ENCODE measurements at regions of chr16 and their contacts with region 1.

Region 1: GRCh38 chr16:71937868-71938510 is 42.7 kb downstream of the IST1 start:
- DNase-seq: no peak
- H3K4me3 ChIP-seq: no peak overlapping the region
- H3K27ac ChIP-seq: no peak overlapping the region
- H3K4me1 ChIP-seq: peaks cover 0 to 8% of the 10 kb centered on the region in 2 donors
- H3K27me3 ChIP-seq: no peaks in the 10 kb centered on the region
- CTCF ChIP-seq: no peak
- POLR2A ChIP-seq: no peak

Region 2: GRCh38 chr16:70481929-70482536 is 1456.0 kb before region 1 on chr16:
- intact Hi-C with region 1: no loop called
- DNase-seq: no peak
- H3K4me3 ChIP-seq: no peak overlapping the region
- H3K27ac ChIP-seq: peak overlapping the region; percentile 27 to 33
- H3K4me1 ChIP-seq: no peaks in the 10 kb centered on the region
- H3K27me3 ChIP-seq: no peaks in the 10 kb centered on the region
- CTCF ChIP-seq: no peak
- POLR2A ChIP-seq: no peak

Region 3: DNA sequence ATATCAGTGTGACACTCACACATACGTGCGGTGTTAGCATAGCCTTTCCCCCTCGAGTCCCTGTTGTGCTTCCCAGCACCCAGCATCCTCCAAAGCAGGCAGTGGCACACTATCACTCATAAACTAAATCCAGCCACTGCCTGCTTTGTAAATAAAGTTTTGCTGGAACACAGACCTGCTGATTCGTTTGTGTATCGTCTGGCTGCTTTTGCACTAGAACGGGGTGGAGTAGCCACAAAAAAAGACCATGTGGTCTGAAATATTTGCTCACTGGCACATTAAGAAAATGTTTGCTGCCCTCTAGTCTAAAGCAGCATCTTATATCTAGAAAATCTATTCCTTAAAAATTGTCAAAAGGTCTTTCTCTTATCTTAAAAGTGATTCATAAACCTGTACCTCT is 1451.1 kb after region 1 on chr16:
- intact Hi-C with region 1: loop called (anchors 5 kb)
- DNase-seq: no peak
- H3K4me3 ChIP-seq: no peak overlapping the region
- H3K27ac ChIP-seq: no peak overlapping the region
- H3K4me1 ChIP-seq: no peaks in the 10 kb centered on the region
- H3K27me3 ChIP-seq: no peaks in the 10 kb centered on the region
- CTCF ChIP-seq: no peak
- POLR2A ChIP-seq: no peak